Heart left ventricle (tissue), 16 donors: ENCODE measurements at regions of chr19 and their contacts with region 1.

Region 1: GRCh38 chr19:36418287-36419001 is at the start of gene ZFP82:
- DNase-seq: peak; percentile 87 to 93 (median 89)
- ATAC-seq: peak; percentile 93 to 98 (median 98)
- H3K4me3 ChIP-seq: peak within 1 kb of the TSS; percentile 60 to 95 (median 76)
- H3K27ac ChIP-seq: peak within 1 kb of the TSS; percentile 80 to 96 (median 90)
- H3K4me1 ChIP-seq: peaks cover 5 to 24% (median 15%) of the 10 kb centered on the region in 12 donors
- H3K27me3 ChIP-seq: no peaks in the 10 kb centered on the region
- CTCF ChIP-seq: no peak
- POLR2A ChIP-seq: peak in 1 of 2 donors; percentile 82
- total RNA-seq, gene ZFP82: 3.4 to 5.3 (median 4.0) TPM

Region 2: DNA sequence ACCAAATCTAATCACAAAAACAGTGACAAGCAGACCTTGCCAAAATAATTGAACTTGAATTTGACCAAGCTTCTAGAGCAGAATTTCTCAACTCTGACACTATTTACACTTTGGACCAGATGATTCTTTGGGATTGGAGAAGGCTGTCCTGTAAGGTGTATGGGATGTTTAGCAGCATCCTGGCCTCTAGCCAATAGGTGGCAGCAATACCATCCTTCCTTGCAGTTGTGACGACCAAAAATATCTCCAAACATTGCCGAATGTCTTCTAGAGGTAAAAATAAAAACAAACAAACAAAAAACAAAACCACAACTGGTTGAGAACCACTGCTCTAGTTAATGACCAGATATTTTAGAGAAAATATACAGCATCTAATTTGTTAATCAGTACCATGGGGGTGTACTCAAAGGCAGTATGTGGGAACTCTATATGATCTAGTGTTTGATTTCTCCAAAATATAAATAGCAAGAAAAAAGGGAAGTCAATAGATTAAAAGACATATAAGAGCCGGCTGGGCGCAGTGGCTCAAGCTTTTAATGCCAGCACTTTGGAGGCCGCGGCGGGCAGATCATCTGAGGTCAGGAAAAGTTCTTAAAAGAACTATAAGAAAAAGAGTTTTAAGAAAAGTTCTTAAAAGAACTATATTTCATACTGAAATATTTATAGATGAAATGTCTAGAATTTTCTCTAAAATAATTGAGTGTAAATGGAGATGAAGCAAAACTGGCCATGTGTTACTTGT is 891.6 kb after region 1 on chr19:
- intact Hi-C with region 1: loop called in 1 of 10 experiments (anchors 10 kb)
- DNase-seq: no peak
- ATAC-seq: no peak
- H3K4me3 ChIP-seq: no peak overlapping the region
- H3K27ac ChIP-seq: no peak overlapping the region
- H3K4me1 ChIP-seq: peaks cover 0 to 10% (median 2%) of the 10 kb centered on the region in 12 donors
- H3K27me3 ChIP-seq: no peaks in the 10 kb centered on the region
- CTCF ChIP-seq: peak in 1 of 12 donors; percentile 12
- POLR2A ChIP-seq: no peak